ENCODE measurements at regions of chr19 and their contacts with region 1.

Region 1: GRCh38 chr19:13339869-13340268 is 166.4 kb downstream of the CACNA1A start:
- DNase-seq: peak; percentile 29 to 68
- H3K4me3 ChIP-seq: no peak overlapping the region
- H3K27ac ChIP-seq: peak overlapping the region; percentile 50 to 59
- H3K4me1 ChIP-seq: peaks cover 0 to 13% (median 3%) of the 10 kb centered on the region in 4 donors
- H3K27me3 ChIP-seq: no peaks in the 10 kb centered on the region
- CTCF ChIP-seq: no peak

Region 2: DNA sequence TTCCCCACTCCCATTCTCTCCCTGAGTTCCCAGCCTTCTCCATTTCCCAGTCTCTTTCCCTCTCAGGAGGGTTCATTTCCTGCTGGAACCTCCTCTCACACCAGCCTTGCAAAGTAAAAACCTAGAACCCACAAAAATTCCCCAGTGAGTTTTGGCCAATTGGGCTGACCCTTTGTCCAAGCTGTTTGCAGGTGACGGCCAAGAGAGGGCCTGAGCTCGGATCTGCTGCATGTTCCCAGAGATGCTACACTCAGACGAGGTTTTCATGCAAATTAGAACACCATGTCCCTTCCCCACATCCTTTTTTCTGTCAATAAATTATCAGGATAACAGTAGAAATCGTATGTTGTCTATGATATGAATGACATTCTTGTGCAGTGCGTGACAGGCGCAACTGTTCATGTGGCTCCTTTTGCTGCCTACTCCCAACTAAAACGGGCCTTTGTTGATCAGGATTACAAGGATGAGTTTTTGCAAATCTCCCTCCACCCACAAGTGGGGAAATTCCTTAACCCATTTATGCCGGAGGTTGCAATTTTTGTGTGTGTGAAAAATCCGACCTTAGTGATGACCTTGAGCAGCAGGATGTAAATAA is 16.9 kb after region 1 on chr19:
- intact Hi-C with region 1: loop called (anchors 1 kb)
- DNase-seq: no peak
- H3K4me3 ChIP-seq: no peak overlapping the region
- H3K27ac ChIP-seq: no peak overlapping the region
- H3K4me1 ChIP-seq: no peaks in the 10 kb centered on the region
- H3K27me3 ChIP-seq: peaks cover 0 to 2% of the 10 kb centered on the region in 2 donors
- CTCF ChIP-seq: no peak

Measured in tibial artery (tissue), 4 donors.